ENCODE measurements at regions of chr18 and their contacts with region 1.

Region 1: DNA sequence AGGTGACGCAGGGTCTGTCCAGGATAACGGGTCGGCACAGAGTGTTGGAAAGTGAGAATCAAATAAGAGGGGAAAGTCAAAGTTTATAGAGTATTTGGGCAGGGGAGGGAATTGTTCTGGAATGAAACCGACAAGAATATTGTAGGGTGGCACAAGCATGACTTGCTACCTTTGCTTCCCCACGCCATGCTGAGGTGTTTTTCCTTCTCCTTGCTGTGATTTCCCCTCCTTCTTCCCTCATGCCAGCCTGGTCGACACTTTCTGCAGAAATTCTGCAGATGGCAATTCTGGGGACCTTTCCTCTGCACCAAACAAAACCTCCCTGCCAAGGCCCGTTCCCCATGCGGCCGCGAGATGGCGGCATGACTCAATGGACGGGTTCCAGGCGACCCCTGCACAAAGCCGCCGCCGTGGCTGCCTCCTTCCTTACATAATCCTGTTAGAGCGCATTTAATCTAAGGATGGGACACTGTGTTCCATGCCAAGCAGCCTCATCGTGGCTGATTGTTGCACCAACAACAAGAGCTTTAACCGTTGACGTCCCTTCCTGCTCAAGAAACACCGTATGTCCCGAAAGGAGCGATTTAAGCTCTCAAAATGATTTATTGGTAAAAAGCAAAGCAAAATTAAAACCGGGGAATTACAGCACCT is at the start of gene MRO:
- DNase-seq: peak; percentile 71 to 77 (median 75)
- H3K4me3 ChIP-seq: peak within 1 kb of the TSS in 1 of 2 donors; percentile 59
- H3K4me3 Mint-ChIP-seq: peak within 1 kb of the TSS in 1 of 8 donors; percentile 43
- H3K27ac ChIP-seq: no peak within 1 kb of the TSS
- H3K27ac Mint-ChIP-seq: no peak within 1 kb of the TSS
- H3K4me1 ChIP-seq: peaks cover 20% of the 10 kb centered on the region
- H3K4me1 Mint-ChIP-seq: no peaks in the 10 kb centered on the region
- H3K27me3 ChIP-seq: peaks cover 4% of the 10 kb centered on the region
- H3K27me3 Mint-ChIP-seq: peaks cover 8 to 17% of the 10 kb centered on the region in 2 donors
- total RNA-seq, gene MRO: not detected

Region 2: GRCh38 chr18:50967714-50968661 is 148.1 kb after region 1 on chr18 and contains the start of gene ELAC1:
- CTCF ChIA-PET with region 1: no interaction called
- POLR2A ChIA-PET with region 1: no interaction called
- intact Hi-C with region 1: loop called (anchors 1 kb)
- DNase-seq: peak; percentile 67 to 76 (median 68)
- H3K4me3 ChIP-seq: peak within 1 kb of the TSS; percentile 77 to 88
- H3K4me3 Mint-ChIP-seq: peak within 1 kb of the TSS; percentile 95 to 99 (median 96)
- H3K27ac ChIP-seq: peak within 1 kb of the TSS; percentile 81
- H3K27ac Mint-ChIP-seq: peak within 1 kb of the TSS; percentile 90 to 98 (median 96)
- H3K4me1 ChIP-seq: peaks cover 25% of the 10 kb centered on the region
- H3K4me1 Mint-ChIP-seq: peaks cover 18 to 29% (median 21%) of the 10 kb centered on the region in 4 donors
- H3K27me3 ChIP-seq: no peaks in the 10 kb centered on the region
- H3K27me3 Mint-ChIP-seq: peaks cover 0 to 3% of the 10 kb centered on the region in 2 donors
- total RNA-seq, gene ELAC1: 11.6 to 11.7 TPM

Region 3: DNA sequence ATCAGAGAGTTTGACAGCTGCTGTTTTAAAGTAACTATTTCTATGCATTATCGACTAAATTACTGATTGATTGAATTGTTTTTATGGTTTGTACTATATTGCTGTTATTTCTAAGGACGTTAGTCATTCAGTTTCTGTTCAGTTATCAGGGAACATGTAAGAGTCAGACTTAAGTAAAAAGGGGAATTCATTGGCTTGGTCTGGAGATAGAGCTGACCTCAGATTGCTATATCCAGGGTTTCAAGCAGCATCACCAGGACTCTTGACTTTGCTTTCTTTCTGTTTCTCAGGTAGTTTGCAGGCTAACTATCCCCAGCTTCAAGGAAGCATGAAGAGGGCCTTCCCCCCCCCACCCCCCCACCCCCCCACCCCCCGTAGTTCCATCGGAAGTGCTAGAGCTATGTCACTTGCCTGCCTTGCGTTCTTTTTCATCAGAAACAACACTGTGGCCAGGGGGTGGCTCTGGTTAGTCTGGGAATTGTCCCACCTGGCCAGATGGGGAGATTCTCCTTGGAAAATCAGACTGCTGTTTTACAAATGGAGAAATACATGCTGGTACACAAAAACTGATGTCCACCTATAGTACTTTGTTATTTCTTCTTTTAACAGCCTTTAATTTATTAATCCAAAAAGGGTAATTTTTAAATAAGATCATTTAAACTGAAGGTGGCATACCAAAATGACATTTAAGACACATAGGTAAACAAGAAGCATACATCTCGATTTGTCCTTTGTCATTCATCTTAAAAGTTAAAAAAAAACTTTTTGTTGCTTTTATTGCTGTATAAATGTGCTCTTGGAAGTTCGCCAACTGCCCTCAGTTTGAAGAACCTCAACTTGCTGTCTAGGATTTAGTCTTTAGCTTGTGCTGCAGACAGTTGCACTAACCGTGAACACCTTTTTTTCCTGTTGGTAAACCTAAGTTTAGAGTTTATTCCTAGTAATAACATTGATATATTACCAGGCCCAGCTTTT is 219.6 kb after region 1 on chr18:
- CTCF ChIA-PET with region 1: interaction called, 10 read pairs
- POLR2A ChIA-PET with region 1: no interaction called
- intact Hi-C with region 1: no loop called
- DNase-seq: peak in 2 of 5 donors; percentile 13 to 36
- H3K4me3 ChIP-seq: no peak overlapping the region
- H3K4me3 Mint-ChIP-seq: peak overlapping the region in 6 of 8 donors; percentile 19 to 69 (median 56)
- H3K27ac ChIP-seq: no peak overlapping the region
- H3K27ac Mint-ChIP-seq: peak overlapping the region in 6 of 7 donors; percentile 6 to 68 (median 50)
- H3K4me1 ChIP-seq: peaks cover 92% of the 10 kb centered on the region
- H3K4me1 Mint-ChIP-seq: peaks cover 70 to 99% (median 84%) of the 10 kb centered on the region in 4 donors
- H3K27me3 ChIP-seq: no peaks in the 10 kb centered on the region
- H3K27me3 Mint-ChIP-seq: no peaks in the 10 kb centered on the region

Region 4: DNA sequence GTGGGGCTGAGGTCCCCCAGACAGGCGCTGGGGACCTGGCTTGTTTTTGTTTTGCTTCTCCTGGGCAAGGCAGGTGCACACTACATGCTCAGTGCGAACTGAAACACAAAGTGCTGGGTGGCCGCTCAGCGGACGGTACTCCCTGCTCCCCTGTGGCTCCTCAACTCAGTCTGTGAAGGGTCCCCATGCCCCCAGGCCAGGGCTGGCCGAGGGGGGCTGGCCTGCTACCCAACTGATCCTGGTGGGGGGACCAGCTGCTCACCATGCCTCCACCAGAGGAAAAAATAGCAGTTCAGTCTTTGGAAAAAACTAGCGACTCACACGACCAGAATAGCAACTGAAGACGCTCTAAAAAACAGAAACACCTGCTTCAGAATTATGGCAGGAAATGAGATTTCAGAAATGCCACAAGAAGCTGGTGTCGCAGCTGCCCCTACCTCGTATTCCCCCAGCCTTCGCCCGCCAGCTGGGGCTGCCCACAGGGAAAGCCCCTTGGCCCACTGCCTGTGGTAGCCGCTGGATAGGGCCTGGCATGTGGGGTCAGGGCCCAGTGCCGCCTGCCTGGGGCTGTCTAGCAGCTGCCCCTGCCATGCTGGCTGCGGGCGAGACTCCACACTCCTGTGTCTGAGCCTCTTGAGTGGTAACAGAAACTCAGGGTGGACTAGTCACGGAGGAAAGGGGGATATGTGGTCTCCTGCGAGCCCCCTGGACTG is 334.0 kb after region 1 on chr18:
- CTCF ChIA-PET with region 1: no interaction called
- POLR2A ChIA-PET with region 1: no interaction called
- intact Hi-C with region 1: loop called (anchors 5 kb)
- DNase-seq: peak; percentile 26 to 69 (median 46)
- H3K4me3 ChIP-seq: peak overlapping the region; percentile 47 to 53
- H3K4me3 Mint-ChIP-seq: peak overlapping the region; percentile 81 to 90 (median 85)
- H3K27ac ChIP-seq: peak overlapping the region; percentile 50
- H3K27ac Mint-ChIP-seq: peak overlapping the region; percentile 78 to 92 (median 87)
- H3K4me1 ChIP-seq: peaks cover 36% of the 10 kb centered on the region
- H3K4me1 Mint-ChIP-seq: peaks cover 20 to 41% (median 29%) of the 10 kb centered on the region in 4 donors
- H3K27me3 ChIP-seq: no peaks in the 10 kb centered on the region
- H3K27me3 Mint-ChIP-seq: no peaks in the 10 kb centered on the region